Common myeloid progenitor, CD34-positive (primary cell): ENCODE measurements at regions of chr5 and their contacts with region 1.

Region 1: DNA sequence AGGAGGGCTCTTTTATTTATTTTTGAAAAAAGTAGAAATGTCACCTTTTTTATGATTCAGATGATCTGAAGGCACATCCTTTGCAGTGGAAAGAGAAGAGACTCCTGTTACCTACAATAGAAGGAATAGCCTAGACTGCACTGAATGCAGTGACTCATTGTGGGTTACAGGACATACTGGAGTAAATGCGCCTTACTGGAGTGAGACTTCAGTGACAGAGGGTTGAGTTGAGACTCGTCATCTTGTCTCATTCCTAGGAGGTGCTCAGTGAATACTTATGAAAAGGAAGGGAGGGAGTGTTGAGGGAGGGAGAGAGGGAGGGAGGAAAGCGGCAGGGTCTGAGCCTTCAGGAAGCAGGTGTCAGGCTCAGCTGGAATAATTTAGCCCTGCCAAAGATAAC is 25.2 kb downstream of the ANKRA2 start:
- DNase-seq: peak in 1 of 3 donors; percentile 28
- H3K4me3 ChIP-seq: no peak overlapping the region
- H3K27ac ChIP-seq: no peak overlapping the region
- H3K4me1 ChIP-seq: no peaks in the 10 kb centered on the region
- H3K27me3 ChIP-seq: peaks cover 0 to 11% (median 7%) of the 10 kb centered on the region in 5 experiments

Region 2: GRCh38 chr5:73513960-73514359 is 26.2 kb before region 1 on chr5:
- CTCF ChIA-PET with region 1: interaction called, 10 read pairs
- POLR2A ChIA-PET with region 1: no interaction called
- DNase-seq: no peak
- H3K4me3 ChIP-seq: no peak overlapping the region
- H3K27ac ChIP-seq: no peak overlapping the region
- H3K4me1 ChIP-seq: no peaks in the 10 kb centered on the region
- H3K27me3 ChIP-seq: no peaks in the 10 kb centered on the region

Region 3: DNA sequence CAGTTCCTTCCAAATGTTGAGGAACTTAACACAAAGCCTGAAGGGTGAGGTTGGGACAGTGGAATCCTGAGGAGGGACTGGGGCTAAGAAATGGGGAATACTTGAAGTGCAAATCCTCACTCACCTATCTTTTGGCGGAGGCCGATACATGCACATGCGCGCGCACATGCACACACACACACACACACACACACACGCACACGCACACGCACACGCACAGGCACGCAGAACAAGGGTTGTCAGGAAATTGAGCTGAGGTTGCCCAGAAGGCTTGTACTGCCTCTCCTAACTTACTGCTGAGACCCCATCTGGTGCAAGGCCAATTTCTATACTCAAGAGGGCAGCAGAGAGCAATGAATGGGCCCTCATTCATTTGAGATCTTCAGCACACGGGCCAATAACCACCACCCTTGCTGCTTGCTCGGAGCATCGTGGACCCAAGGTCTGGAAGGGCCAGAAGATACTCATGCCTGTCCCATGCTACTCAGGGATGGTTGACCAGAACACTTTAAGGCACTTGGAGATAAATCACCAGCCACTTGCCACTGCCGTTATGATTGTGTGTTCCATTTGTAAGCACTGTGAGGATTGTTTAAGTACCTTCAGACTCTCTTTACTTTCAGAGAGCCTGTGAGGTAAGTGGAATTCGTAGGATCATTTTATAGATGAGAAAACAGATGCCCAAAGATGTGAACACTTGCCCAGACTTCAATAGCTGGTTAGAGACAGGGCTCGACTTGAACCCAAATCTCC is 20.5 kb before region 1 on chr5:
- CTCF ChIA-PET with region 1: interaction called, 55 read pairs
- POLR2A ChIA-PET with region 1: no interaction called
- DNase-seq: peak; percentile 78 to 89 (median 85)
- H3K4me3 ChIP-seq: peak overlapping the region in 2 of 7 experiments; percentile 29 to 37
- H3K27ac ChIP-seq: no peak overlapping the region
- H3K4me1 ChIP-seq: peaks cover 0 to 2% (median 0%) of the 10 kb centered on the region in 4 experiments
- H3K27me3 ChIP-seq: no peaks in the 10 kb centered on the region

Region 4: GRCh38 chr5:73528248-73528647 is 11.9 kb before region 1 on chr5:
- CTCF ChIA-PET with region 1: interaction called, 55 read pairs
- POLR2A ChIA-PET with region 1: no interaction called
- DNase-seq: no peak
- H3K4me3 ChIP-seq: no peak overlapping the region
- H3K27ac ChIP-seq: no peak overlapping the region
- H3K4me1 ChIP-seq: no peaks in the 10 kb centered on the region
- H3K27me3 ChIP-seq: peaks cover 0 to 15% (median 5%) of the 10 kb centered on the region in 5 experiments